Caco-2 (cell line): ENCODE measurements at regions of chr15 and their contacts with region 1.

Region 1: DNA sequence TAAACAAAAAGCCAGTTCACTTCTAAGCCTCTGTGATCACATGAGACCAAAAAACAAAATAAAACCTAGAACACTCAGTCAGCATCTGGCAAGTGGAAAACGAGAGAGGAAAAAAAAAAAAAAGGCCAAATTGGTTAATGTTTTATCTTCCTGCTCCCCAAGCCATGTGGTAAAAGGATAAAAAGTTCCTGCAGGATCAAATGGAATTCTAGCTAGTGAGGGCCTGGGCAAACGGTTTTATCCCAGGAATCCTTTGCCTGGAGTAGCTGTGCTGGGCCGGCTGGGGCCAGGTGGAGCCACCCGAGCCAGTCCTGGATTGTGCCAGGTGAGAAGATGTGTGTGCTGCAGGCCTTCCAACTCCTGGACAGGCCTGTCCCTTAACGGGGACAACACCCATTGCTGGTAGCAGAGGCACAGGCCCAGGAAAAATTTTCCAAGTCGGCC is 13.2 kb downstream of the SMAD6 start:
- DNase-seq: no peak
- H3K4me3 ChIP-seq: no peak overlapping the region
- H3K4me3 Mint-ChIP-seq: no peak overlapping the region
- H3K27ac Mint-ChIP-seq: no peak overlapping the region
- H3K4me1 ChIP-seq: peaks cover 19% of the 10 kb centered on the region
- H3K4me1 Mint-ChIP-seq: peaks cover 18% of the 10 kb centered on the region
- H3K27me3 ChIP-seq: no peaks in the 10 kb centered on the region
- H3K27me3 Mint-ChIP-seq: no peaks in the 10 kb centered on the region
- CTCF ChIP-seq: no peak

Region 2: DNA sequence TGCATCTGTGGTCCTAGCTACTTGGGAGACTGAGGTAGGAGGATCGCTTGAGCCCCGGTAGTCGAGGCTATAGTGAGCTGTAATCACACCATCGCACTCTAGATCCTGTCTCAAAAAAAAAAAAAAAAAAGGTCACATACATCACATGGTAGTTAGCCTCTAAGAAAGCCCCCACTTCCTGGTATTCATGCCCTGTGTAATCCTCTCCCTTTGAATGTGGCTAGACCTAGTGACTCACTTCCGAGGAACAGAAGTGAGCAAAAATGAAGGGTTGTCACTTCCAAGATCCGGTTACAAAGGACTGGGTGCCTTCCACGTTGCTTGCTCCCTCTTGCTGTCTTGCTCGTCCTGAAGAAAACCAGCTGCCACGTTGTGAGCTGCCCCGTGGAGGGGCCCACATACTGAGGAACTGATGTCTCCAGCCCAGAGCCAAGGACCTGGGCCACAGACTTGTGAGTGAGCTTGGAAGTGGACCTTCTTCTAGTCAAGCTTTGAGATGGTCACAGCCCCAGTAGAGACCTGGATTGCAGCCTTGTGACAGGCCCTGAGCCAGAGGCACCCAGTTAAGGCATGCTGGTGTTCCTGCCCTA is 136.8 kb before region 1 on chr15:
- CTCF ChIA-PET with region 1: no interaction called
- POLR2A ChIA-PET with region 1: interaction called, 11 read pairs
- intact Hi-C with region 1: no loop called
- DNase-seq: no peak
- H3K4me3 ChIP-seq: no peak overlapping the region
- H3K4me3 Mint-ChIP-seq: no peak overlapping the region
- H3K27ac Mint-ChIP-seq: no peak overlapping the region
- H3K4me1 ChIP-seq: peaks cover 8% of the 10 kb centered on the region; the same call in 1 of the 2 replicates
- H3K4me1 Mint-ChIP-seq: peaks cover 7% of the 10 kb centered on the region
- H3K27me3 ChIP-seq: no peaks in the 10 kb centered on the region
- H3K27me3 Mint-ChIP-seq: no peaks in the 10 kb centered on the region
- CTCF ChIP-seq: no peak